ENCODE measurements at regions of chr11 and their contacts with region 1.

Region 1: GRCh38 chr11:80930038-80930437 is 1489.2 kb upstream of the TENM4 start:
- DNase-seq: no peak
- H3K4me3 ChIP-seq: no peak overlapping the region
- H3K27ac ChIP-seq: no peak overlapping the region
- H3K4me1 ChIP-seq: no peaks in the 10 kb centered on the region
- H3K27me3 ChIP-seq: no peaks in the 10 kb centered on the region
- CTCF ChIP-seq: no peak
- EP300 ChIP-seq: no peak
- POLR2A ChIP-seq: no peak

Region 2: DNA sequence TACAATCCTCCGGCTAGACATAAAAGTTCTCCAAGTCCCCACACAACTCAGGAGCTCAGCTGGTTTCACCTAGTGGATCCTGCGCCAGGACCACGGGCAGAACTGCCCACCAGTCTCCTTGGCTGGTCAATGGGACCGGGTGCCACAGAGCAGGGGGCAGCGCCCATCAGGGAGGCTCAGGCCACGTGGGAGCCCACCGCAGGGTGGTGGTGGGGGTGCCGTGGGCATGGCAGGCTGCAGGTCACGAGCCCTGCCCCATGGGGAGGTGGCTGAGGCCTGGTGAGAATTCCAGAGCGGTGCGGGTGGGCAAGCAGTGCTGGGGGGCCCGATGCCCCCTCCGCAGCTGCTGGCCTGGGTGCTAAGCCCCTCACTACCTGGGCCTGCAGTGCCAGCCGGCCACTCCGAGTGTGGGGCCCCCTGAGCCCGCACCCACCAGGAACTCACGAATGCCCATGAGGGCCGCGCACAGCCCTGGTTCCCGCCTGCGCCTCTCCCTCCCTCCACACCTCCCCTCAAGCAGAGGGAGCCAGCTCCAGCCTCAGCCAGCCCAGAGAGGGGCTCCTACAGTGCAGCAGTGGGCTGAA is 397.3 kb before region 1 on chr11:
- intact Hi-C with region 1: no loop called
- DNase-seq: peak in 1 of 5 donors; percentile 9
- H3K4me3 ChIP-seq: no peak overlapping the region
- H3K27ac ChIP-seq: no peak overlapping the region
- H3K4me1 ChIP-seq: no peaks in the 10 kb centered on the region
- H3K27me3 ChIP-seq: no peaks in the 10 kb centered on the region
- CTCF ChIP-seq: no peak
- EP300 ChIP-seq: no peak
- POLR2A ChIP-seq: no peak

Region 3: GRCh38 chr11:80980221-80980620 is 50.2 kb after region 1 on chr11:
- intact Hi-C with region 1: loop called in 1 of 4 experiments (anchors 2 kb)
- DNase-seq: no peak
- H3K4me3 ChIP-seq: no peak overlapping the region
- H3K27ac ChIP-seq: no peak overlapping the region
- H3K4me1 ChIP-seq: no peaks in the 10 kb centered on the region
- H3K27me3 ChIP-seq: no peaks in the 10 kb centered on the region
- CTCF ChIP-seq: no peak
- EP300 ChIP-seq: no peak
- POLR2A ChIP-seq: no peak